ENCODE measurements at regions of chr11 and their contacts with region 1.

Region 1: GRCh38 chr11:12174477-12175143 is 64.2 kb downstream of the MICAL2 start:
- DNase-seq: no peak
- H3K4me3 Mint-ChIP-seq: peak overlapping the region; percentile 75
- H3K27ac Mint-ChIP-seq: peak overlapping the region; percentile 93
- H3K4me1 Mint-ChIP-seq: peaks cover 79% of the 10 kb centered on the region
- H3K27me3 Mint-ChIP-seq: peaks cover 2% of the 10 kb centered on the region

Region 2: DNA sequence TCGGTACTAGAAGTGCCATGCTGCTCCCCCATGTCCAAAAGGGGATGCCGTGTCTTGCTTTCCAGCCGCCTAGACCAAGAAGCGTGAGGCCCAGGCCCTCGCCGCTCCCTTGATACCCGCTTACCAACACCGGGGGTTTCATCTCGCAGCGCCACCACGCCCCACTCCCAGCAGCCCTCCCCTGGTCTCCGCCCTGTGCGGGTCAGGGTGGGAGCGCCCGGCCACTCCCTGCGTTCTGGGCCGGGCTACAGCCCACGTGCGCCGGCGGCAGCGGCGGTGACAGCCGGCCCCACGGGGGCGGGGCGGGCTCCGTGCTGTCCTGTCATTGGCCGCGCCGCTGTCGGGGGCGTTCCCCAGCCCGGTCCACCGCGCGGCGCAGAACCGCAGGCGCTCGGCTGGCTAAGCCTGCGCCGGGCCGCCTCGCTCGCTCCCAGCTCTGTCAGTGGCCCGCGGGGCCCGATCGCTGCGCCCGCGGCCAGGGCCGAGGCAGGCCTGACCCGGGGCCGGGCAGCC is 64.4 kb before region 1 on chr11 and contains the start of gene MICAL2:
- intact Hi-C with region 1: loop called (anchors 1 kb)
- DNase-seq: peak; percentile 90
- H3K4me3 Mint-ChIP-seq: peak within 1 kb of the TSS; percentile 90
- H3K27ac Mint-ChIP-seq: peak within 1 kb of the TSS; percentile 99
- H3K4me1 Mint-ChIP-seq: peaks cover 75% of the 10 kb centered on the region
- H3K27me3 Mint-ChIP-seq: no peaks in the 10 kb centered on the region
- total RNA-seq, gene MICAL2: 595 and 619 TPM in 2 replicates

Region 3: DNA sequence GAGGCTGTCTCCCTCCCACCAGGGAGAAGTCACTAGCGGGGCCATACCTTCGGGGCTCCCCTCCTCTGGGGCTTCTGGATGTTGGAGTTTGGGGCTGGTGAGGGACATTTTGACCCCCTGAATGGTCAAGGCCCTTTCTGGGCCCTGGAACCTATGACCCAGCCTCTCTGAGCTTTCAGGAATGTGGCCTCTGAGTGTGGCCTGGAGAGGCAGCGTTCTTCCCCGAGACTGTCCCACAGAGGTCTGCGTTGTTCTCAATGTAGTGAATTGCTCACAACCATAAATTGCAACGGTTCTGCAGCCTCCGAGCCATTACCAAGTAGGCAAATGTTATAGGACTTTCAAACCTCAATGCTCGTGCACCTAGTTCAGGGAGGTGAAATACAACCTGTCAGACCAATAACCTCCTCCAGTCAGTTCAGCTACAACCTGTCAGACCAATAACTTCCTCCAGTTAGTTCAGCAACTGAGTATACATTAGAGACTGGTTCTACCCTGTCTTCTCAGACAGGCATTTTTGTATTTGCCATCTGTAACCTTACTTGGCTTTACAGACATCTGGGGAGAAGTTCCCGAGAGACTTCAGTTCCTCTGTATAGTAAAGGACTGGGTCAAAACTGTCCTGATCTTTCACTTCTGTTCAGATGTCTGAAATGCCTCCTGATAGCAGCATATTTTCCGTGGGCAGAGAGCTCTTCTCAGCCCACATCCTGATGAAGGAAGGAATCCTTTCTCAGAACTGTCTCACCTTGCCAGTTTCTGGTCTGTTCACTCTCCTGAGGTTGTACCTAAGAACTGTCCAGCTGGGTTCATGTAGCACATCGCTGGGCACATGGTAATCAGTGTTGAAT is 30.1 kb before region 1 on chr11:
- intact Hi-C with region 1: loop called (anchors 5 kb)
- DNase-seq: no peak
- H3K4me3 Mint-ChIP-seq: peak overlapping the region; percentile 50
- H3K27ac Mint-ChIP-seq: peak overlapping the region; percentile 92
- H3K4me1 Mint-ChIP-seq: peaks cover 94% of the 10 kb centered on the region
- H3K27me3 Mint-ChIP-seq: no peaks in the 10 kb centered on the region

Region 4: GRCh38 chr11:12189543-12190235 is 15.1 kb after region 1 on chr11:
- intact Hi-C with region 1: loop called (anchors 1 kb)
- DNase-seq: no peak
- H3K4me3 Mint-ChIP-seq: peak overlapping the region; percentile 48
- H3K27ac Mint-ChIP-seq: peak overlapping the region; percentile 80
- H3K4me1 Mint-ChIP-seq: peaks cover 82% of the 10 kb centered on the region
- H3K27me3 Mint-ChIP-seq: no peaks in the 10 kb centered on the region

Region 5: DNA sequence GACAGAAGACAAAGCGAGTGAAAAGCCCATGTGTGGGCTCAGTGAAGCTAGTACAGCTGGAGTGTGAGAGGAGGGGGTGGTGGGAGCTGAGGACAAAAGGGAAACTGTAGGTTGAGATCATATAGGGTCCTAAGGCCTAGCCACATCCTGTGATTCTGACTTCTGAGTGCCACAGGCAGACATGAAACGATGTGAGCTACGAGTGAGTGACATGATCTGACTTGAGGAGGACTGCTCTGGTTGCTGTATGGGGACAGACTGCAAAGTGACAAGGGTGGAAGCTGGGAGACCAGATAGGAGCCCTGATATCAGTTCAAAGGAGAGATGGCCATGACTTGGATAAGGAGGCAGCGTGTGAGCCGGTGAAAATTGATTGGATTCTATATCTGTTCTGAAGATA is 21.2 kb after region 1 on chr11:
- intact Hi-C with region 1: loop called (anchors 1 kb)
- DNase-seq: peak; percentile 62
- H3K4me3 Mint-ChIP-seq: peak overlapping the region; percentile 97
- H3K27ac Mint-ChIP-seq: peak overlapping the region; percentile 96
- H3K4me1 Mint-ChIP-seq: peaks cover 69% of the 10 kb centered on the region
- H3K27me3 Mint-ChIP-seq: no peaks in the 10 kb centered on the region

Region 6: DNA sequence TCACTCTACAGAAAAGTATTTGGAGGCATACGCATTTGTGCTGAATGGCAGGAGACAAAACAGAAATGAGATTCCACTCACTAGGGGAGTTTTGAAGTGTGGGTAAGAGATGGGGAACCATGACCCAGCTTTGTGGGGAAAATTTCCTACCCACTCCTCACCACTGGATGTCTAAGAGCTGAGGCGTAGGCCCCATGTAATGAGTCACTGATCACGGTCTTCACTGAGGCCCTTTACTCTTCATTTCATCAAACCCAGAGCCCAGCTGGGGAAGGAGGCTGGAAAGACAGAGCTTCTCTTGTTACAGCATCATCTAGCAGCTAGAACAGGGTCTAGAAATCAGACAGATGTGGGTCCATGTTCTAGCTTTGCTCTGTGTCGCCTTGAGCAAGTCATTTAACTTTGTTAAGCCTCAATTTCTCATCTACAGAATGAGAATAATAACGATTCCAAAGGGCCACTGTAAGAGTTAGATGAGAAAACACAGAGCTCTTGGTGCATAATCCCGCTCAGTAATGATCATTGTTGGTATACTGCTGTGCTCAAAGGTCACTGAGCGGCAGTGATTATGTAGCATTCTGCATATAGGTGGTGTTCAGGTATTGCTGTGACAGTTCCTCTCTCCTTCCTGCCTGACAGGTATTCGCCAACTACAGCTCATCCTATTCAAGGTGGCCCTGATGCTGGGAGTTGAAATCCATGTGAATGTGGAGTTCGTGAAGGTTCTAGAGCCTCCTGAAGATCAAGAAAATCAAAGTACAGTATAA is 33.0 kb after region 1 on chr11:
- intact Hi-C with region 1: loop called (anchors 1 kb)
- DNase-seq: no peak
- H3K4me3 Mint-ChIP-seq: peak overlapping the region; percentile 68
- H3K27ac Mint-ChIP-seq: peak overlapping the region; percentile 93
- H3K4me1 Mint-ChIP-seq: peaks cover 87% of the 10 kb centered on the region
- H3K27me3 Mint-ChIP-seq: no peaks in the 10 kb centered on the region

Region 7: GRCh38 chr11:12224537-12224893 is 49.9 kb after region 1 on chr11:
- intact Hi-C with region 1: loop called (anchors 1 kb)
- DNase-seq: peak; percentile 85
- H3K4me3 Mint-ChIP-seq: peak overlapping the region; percentile 68
- H3K27ac Mint-ChIP-seq: peak overlapping the region; percentile 91
- H3K4me1 Mint-ChIP-seq: peaks cover 69% of the 10 kb centered on the region
- H3K27me3 Mint-ChIP-seq: no peaks in the 10 kb centered on the region

Region 8: DNA sequence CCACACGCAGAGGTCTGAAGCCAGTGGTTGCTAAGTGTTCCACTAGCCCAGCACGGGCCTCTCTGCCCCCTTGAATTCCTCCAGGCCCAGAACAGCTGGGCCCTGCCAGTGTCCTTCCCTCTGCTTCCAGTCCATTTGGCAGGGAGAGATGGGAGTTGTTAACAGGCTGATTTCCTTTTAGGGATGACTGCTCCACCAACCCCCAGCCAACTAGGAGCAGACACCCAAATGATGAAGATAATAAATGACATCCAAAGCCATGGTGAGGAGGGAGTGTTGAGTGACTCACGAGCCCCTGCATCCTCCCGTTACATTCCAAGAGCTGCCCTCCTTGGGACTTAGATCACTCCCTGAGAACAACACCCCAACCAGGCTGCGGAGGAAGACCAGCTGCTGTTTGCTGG is 223.3 kb after region 1 on chr11:
- intact Hi-C with region 1: no loop called
- DNase-seq: no peak
- H3K4me3 Mint-ChIP-seq: no peak overlapping the region
- H3K27ac Mint-ChIP-seq: no peak overlapping the region
- H3K4me1 Mint-ChIP-seq: no peaks in the 10 kb centered on the region
- H3K27me3 Mint-ChIP-seq: peaks cover 8% of the 10 kb centered on the region

Measured in activated T-helper 1 cell treated with anti-CD3 and anti-CD28 coated beads, Interleukin-12 subunit alpha, Interleukin-12 subunit beta, Interleukin-2, Interleukin-4 antibody, amounts not matched to agents 30 ng/mL and 10 ng/mL and 1 ng/mL, durations not matched to agents 14 hours and 24 hours and 36 hours (primary cell).